Body of pancreas (tissue), 4 donors: ENCODE measurements at regions of chr2 and their contacts with region 1.

Region 1: DNA sequence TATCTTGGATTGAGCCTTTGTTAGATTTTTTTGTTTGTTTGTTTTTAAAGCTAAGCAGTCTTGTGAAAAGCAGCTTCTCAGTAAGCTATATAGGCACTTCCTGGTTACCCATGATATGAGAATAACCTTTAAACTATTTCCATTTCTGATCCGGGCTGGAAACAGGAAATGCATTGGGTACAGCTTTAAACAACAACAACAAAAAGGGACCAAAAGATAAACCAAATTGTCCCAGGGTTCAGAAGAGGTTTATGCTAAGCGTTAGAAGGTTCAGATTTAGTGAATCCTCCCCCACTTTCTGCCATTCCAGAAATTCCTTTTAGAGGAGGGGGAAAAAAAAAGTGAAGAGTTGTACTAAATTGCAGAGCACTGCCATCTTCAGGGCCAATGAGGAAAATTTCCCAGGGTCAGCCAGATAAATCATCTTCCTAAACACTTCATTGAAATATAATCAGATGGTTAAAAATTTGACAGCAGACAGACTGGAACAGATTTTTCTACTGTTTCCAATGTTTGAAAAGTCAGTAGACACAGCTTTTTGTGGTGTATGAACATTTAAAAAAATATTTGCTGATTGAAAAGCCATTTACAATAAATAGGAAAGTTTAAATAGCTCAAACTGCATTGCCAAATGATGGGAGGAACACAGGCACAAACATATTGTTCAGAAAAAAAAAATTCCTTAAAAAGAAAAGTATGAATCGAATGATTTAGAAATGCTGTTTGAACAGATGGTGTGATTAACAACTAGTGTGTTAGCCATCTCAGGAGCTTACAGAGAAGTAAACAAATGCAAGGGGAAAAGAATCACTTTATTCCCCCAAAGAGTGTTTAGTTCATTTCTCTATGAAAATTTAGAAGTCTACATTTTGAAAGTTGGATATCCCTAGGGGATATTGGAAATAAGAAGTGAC is 189.9 kb upstream of the TANK start:
- DNase-seq: peak; percentile 32 to 50 (median 44)
- ATAC-seq: peak; percentile 83
- H3K4me3 ChIP-seq: no peak overlapping the region
- H3K27ac ChIP-seq: peak overlapping the region in 3 of 4 donors; percentile 47 to 71 (median 55)
- H3K4me1 ChIP-seq: no peaks in the 10 kb centered on the region
- H3K27me3 ChIP-seq: no peaks in the 10 kb centered on the region
- CTCF ChIP-seq: peak; percentile 33 to 78 (median 68)
- POLR2A ChIP-seq: no peak

Region 2: DNA sequence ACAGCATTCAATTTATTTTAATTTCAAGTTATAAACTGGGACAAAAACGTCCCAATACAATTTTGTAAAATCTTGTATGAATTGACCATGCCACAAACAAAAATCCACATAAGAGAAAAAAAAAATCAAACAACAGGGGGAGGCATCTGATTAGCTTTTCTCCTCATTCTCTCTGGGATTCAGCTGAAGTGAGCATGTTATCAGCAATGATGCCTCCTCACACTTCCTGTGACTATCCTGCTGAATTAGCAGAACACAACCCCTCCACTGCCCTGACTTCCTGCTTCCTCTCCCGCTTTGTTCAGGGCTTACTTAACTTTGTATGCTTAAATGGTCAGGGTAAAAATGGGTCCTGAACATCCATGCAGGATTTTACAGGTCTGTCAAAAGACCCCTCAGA is 638.0 kb before region 1 on chr2:
- intact Hi-C with region 1: loop called (anchors 10 kb)
- DNase-seq: peak in 1 of 4 donors; percentile 35
- ATAC-seq: no peak
- H3K4me3 ChIP-seq: no peak overlapping the region
- H3K27ac ChIP-seq: no peak overlapping the region
- H3K4me1 ChIP-seq: peaks cover 8% of the 10 kb centered on the region
- H3K27me3 ChIP-seq: no peaks in the 10 kb centered on the region
- CTCF ChIP-seq: no peak
- POLR2A ChIP-seq: no peak

Region 3: GRCh38 chr2:160687629-160688028 is 282.7 kb before region 1 on chr2:
- intact Hi-C with region 1: no loop called
- DNase-seq: no peak
- ATAC-seq: no peak
- H3K4me3 ChIP-seq: no peak overlapping the region
- H3K27ac ChIP-seq: no peak overlapping the region
- H3K4me1 ChIP-seq: peaks cover 3% of the 10 kb centered on the region
- H3K27me3 ChIP-seq: no peaks in the 10 kb centered on the region
- CTCF ChIP-seq: no peak
- POLR2A ChIP-seq: no peak

Region 4: GRCh38 chr2:161122772-161123530 is 152.6 kb after region 1 on chr2:
- intact Hi-C with region 1: no loop called
- DNase-seq: peak; percentile 33 to 76 (median 66)
- ATAC-seq: peak; percentile 98
- H3K4me3 ChIP-seq: no peak overlapping the region
- H3K27ac ChIP-seq: peak overlapping the region; percentile 48 to 77 (median 56)
- H3K4me1 ChIP-seq: peaks cover 20% of the 10 kb centered on the region
- H3K27me3 ChIP-seq: no peaks in the 10 kb centered on the region
- CTCF ChIP-seq: no peak
- POLR2A ChIP-seq: no peak